ENCODE measurements at regions of chr3 and their contacts with region 1.

Region 1: DNA sequence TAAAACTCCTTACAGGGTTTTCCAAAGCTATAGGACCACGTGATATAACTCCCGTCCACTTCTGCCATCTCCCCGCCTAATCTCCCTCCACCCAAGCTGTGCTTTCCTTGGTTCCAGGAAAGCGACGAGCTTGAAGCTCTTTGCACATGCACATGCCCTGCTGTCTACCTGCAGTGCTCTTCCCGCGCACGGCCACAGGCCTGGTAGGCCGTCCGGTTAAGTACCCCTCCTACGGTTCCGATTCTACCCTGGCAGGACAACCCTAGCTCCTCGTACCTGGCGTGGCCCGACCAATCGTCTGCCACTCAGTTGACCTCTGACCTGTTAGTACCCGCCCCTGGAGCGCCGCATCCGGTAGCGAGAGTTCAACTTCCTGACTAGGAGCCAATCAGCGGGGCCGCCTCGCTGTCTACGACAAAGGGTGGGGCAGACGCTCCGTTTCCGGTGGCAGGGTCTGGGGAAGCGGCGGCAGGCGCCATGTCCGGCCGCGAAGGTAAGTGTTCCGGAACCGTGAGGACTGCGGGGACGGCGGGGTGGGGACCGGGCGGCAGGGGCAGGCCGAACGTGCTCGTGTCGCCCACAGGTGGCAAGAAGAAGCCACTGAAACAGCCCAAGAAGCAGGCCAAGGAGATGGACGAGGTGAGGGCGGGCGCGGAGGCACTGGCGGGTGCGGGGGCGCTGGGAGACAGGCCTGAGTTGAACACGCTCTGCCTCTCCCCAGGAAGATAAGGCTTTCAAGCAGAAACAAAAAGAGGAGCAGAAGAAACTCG is at the starts of genes CCDC51 and TMA7:
- DNase-seq: peak; percentile 99
- CTCF ChIP-seq: no peak

Region 2: GRCh38 chr3:48194446-48195071 is 245.4 kb before region 1 on chr3:
- CTCF ChIA-PET with region 1: interaction called, 52 read pairs
- POLR2A ChIA-PET with region 1: no interaction called
- DNase-seq: peak; percentile 70
- CTCF ChIP-seq: peak; percentile 78

Region 3: GRCh38 chr3:48240711-48241491 is 199.1 kb before region 1 on chr3 and contains the start of gene ZNF589:
- CTCF ChIA-PET with region 1: interaction called, 132 read pairs
- POLR2A ChIA-PET with region 1: no interaction called
- DNase-seq: peak; percentile 96
- CTCF ChIP-seq: peak; percentile 53

Region 4: DNA sequence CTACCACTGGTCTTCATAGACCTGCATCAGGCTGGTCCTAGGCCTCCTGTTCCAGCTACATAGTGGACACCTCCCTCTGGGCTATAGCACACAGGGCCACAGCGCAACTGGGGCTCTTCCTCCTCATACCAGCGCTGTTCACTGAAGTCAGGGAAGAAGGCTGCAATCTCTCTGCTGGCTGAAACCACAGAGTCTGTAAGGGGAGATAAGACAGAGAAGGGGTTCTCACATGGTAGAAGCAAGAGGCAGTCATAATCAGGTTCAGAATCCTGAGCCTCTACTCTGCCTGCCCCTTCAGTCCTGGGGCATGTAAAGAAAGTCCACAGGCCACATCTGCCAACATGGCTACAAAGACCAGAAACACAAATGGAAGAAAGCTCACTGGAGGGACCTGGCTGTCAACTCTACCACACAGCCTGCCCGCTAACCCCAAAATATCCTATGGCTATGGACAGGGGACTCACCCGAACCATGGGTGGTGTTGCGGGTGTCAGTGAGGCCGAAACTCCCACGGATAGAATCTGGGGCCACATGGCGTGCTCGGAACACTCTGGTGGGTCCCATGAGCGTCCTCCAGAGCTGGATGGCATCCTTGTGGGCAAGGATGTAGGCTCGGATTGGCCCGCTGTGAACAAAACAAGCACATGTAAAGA is 145.3 kb before region 1 on chr3:
- CTCF ChIA-PET with region 1: interaction called, 11 read pairs
- POLR2A ChIA-PET with region 1: no interaction called
- DNase-seq: no peak
- CTCF ChIP-seq: no peak

Region 5: DNA sequence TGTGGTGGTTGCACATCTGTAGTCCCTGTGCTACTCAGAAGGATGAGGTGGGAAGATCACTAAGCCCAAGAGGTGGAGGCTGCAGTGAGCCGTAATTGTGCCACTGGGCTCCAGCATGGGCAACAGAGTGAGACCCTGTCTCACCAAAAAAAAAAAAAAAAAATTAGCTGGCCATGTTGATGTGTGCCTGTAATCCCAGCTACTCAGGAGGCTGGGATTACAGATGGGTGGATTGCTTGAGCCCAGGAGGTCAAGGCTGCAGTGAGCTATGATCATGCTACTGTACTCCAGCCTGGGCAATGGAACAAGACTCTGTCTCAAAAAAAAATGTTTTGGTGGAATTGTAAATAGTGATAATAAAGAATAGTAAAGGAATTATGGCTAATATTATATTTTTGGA is 16.5 kb after region 1 on chr3:
- CTCF ChIA-PET with region 1: interaction called, 53 read pairs
- POLR2A ChIA-PET with region 1: no interaction called
- DNase-seq: no peak
- CTCF ChIP-seq: no peak

Region 6: DNA sequence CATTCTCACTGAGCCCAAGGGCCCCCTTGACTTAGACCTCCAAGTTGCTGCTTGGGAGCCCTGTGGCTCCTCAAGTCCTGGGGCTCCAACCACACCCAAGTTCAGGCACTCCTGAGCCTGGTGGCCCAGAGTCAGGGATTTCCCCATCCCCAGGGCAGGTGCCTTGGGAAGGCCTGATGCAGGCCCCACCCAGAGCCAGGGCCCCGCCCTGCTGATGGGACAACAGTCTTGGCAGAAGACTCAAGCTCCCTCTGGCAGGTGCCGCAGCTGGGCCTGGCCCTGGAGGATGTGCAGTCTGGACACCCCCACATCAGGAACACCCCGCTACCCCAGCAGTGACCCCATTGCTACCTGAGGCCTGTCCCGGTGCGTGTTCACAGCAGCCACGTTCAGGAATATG is 81.6 kb after region 1 on chr3:
- CTCF ChIA-PET with region 1: interaction called, 17 read pairs
- POLR2A ChIA-PET with region 1: no interaction called
- DNase-seq: no peak
- CTCF ChIP-seq: no peak